Common myeloid progenitor, CD34-positive (primary cell): ENCODE measurements at regions of chr16 and their contacts with region 1.

Region 1: DNA sequence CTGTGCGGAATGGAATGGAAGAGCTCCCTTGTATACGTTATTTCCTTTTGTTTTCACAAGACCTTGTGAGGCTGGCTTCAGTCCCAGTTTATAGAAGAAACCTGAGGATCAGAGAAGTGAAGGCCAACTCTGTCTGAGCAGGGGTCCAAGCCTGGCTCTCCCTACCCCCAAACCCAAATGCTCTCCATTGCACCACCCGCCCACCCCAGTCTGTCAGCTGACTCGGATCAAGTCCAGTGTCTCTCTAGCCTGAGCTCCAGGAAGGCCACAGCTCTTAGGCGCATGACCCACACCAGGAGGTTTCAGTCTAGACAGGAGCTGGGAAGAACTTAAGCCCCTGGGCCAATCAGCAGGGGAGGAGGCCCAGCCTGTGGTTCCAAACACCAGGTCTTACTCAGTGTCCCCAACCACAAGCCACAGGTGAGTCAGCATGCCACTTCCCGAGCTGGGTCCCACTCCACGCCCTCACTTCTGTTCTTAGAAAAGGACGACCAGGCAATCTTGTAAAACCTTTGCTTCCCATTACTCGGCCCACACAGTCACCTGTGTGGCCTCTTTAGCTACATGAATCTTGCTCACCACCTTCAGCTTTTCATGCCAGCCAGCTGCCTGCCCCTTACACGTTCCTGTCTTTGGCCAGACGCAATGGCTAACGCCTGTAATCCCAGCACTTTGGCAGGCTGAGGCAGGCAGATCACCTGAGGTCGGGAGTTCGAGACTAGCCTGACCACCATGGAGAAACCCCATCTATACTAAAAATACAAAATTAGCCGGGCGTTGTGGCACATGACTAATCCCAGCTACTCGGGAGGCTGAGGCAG is 27.8 kb downstream of the TK2 start:
- DNase-seq: peak; percentile 87 to 96 (median 94)
- H3K4me3 ChIP-seq: peak overlapping the region in 4 of 7 experiments; percentile 2 to 41 (median 31)
- H3K27ac ChIP-seq: peak overlapping the region in 1 of 2 experiments; percentile 68
- H3K4me1 ChIP-seq: peaks cover 50 to 96% (median 93%) of the 10 kb centered on the region in 4 experiments
- H3K27me3 ChIP-seq: no peaks in the 10 kb centered on the region

Region 2: DNA sequence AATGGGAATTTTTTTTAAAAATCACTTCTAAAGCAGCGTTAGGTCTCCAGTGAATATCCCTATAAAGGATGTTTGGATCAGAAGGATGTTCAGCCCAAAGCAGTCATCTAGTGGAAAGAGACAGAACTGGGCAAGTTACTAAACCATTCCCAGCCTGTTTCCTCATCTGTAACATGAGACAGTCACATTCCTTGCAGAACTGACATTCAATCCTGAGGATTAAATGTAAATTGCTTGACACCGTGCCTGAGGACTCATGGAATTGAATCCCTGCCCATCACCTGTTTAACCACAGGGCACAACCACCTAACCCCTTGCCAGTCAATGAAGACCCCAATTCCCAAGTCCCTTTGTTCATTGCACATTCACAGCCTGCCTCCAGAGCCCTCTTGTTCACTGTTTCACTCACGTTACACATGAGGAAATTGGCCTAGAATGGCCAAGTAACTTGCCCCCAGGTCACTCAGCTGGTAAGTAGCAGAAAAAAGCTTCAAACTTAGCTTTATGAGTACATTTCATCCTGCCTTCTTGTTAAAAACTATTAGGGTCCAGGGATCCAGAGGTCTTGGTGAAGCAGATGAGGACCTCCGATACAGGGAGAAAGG is 58.5 kb after region 1 on chr16:
- CTCF ChIA-PET with region 1: interaction called, 20 read pairs
- POLR2A ChIA-PET with region 1: no interaction called
- DNase-seq: no peak
- H3K4me3 ChIP-seq: no peak overlapping the region
- H3K27ac ChIP-seq: no peak overlapping the region
- H3K4me1 ChIP-seq: peaks cover 8 to 36% (median 29%) of the 10 kb centered on the region in 4 experiments
- H3K27me3 ChIP-seq: peaks cover 0 to 1% (median 0%) of the 10 kb centered on the region in 5 experiments

Region 3: DNA sequence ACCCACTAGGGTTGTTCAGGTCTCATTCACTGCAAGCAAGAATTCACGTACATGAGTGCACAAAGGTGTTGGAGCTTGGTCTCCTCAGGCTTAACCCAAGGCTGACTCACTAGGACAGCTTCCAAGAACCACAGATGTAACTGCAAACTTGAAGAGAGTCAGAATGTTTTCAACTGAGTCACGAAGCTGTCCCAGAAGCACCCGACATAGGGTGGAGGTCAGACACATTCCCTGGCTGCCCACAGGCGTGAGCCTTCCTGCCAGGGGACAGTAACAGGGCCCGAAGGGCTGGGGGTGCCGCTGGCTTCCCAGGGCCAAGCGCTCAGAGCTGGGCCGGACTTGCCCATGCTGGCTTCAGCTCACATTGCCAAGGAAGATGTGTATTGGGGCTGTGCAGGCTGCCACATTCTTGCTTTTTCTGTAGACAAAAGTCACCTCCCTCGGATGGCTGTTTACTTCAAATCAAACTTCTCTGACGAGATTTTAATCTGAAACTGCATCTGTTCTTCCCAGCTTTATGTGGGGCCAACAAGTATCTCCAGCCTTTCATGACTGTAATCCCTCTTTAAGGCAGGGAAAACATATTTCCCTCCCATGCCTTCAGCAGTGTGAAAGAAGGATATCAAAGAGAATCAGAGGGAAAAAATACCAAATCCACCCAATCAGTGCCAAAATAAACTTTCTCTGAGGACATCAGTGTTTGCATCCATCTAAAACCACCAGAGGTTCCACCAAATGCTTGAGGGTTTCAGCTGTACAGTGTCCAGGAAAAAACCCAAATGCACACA is 96.6 kb after region 1 on chr16:
- CTCF ChIA-PET with region 1: no interaction called
- POLR2A ChIA-PET with region 1: no interaction called
- DNase-seq: no peak
- H3K4me3 ChIP-seq: no peak overlapping the region
- H3K27ac ChIP-seq: no peak overlapping the region
- H3K4me1 ChIP-seq: no peaks in the 10 kb centered on the region
- H3K27me3 ChIP-seq: no peaks in the 10 kb centered on the region

Region 4: GRCh38 chr16:66650707-66651473 is 128.7 kb after region 1 on chr16:
- CTCF ChIA-PET with region 1: no interaction called
- POLR2A ChIA-PET with region 1: no interaction called
- DNase-seq: peak; percentile 88 to 94 (median 93)
- H3K4me3 ChIP-seq: peak overlapping the region in 4 of 7 experiments; percentile 29 to 73 (median 56)
- H3K27ac ChIP-seq: no peak overlapping the region
- H3K4me1 ChIP-seq: peaks cover 4 to 15% (median 9%) of the 10 kb centered on the region in 4 experiments
- H3K27me3 ChIP-seq: no peaks in the 10 kb centered on the region

Region 5: DNA sequence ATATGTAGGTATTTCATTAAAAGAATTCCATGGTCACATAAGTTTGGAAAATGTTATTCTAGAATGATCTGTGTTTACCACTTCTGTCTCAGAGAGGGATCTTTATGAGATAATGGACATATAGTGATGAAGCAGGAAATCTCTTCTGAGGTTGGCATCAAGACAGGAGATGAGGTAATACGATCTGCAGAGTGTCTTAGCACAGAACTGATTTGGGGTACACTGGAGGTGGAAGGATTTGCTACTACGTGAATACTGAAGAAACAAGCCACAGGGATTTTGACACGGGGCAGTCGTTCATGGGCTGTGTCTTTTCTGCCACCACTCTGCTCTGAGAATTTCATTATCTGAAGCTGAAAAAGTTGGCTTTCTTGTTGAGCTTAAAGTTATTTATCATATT is 512.3 kb after region 1 on chr16:
- CTCF ChIA-PET with region 1: no interaction called
- POLR2A ChIA-PET with region 1: no interaction called
- DNase-seq: no peak
- H3K4me3 ChIP-seq: no peak overlapping the region
- H3K27ac ChIP-seq: no peak overlapping the region
- H3K4me1 ChIP-seq: peaks cover 12 to 32% (median 14%) of the 10 kb centered on the region in 4 experiments
- H3K27me3 ChIP-seq: no peaks in the 10 kb centered on the region